ENCODE measurements at regions of chr10 and their contacts with region 1.

Region 1: GRCh38 chr10:97714048-97714371 is 480 bp downstream of the MARVELD1 start:
- DNase-seq: peak; percentile 71
- H3K4me3 Mint-ChIP-seq: peak overlapping the region; percentile 100
- H3K27ac Mint-ChIP-seq: peak overlapping the region; percentile 84
- H3K4me1 Mint-ChIP-seq: peaks cover 17% of the 10 kb centered on the region
- H3K27me3 Mint-ChIP-seq: peaks cover 90% of the 10 kb centered on the region

Region 2: GRCh38 chr10:97659589-97659988 is 54.4 kb before region 1 on chr10:
- CTCF ChIA-PET with region 1: no interaction called
- DNase-seq: no peak
- H3K4me3 Mint-ChIP-seq: no peak overlapping the region
- H3K27ac Mint-ChIP-seq: no peak overlapping the region
- H3K4me1 Mint-ChIP-seq: no peaks in the 10 kb centered on the region
- H3K27me3 Mint-ChIP-seq: no peaks in the 10 kb centered on the region

Region 3: GRCh38 chr10:97686962-97687784 is 26.8 kb before region 1 on chr10 and contains the start of gene AVPI1:
- CTCF ChIA-PET with region 1: interaction called, 27 read pairs
- DNase-seq: peak; percentile 97
- H3K4me3 Mint-ChIP-seq: peak within 1 kb of the TSS; percentile 80
- H3K27ac Mint-ChIP-seq: peak within 1 kb of the TSS; percentile 22
- H3K4me1 Mint-ChIP-seq: peaks cover 18% of the 10 kb centered on the region
- H3K27me3 Mint-ChIP-seq: peaks cover 16% of the 10 kb centered on the region

Region 4: GRCh38 chr10:97736902-97737769 is 23.1 kb after region 1 on chr10 and contains the start of gene ZFYVE27:
- CTCF ChIA-PET with region 1: interaction called, 402 read pairs
- DNase-seq: peak; percentile 97
- H3K4me3 Mint-ChIP-seq: peak within 1 kb of the TSS; percentile 95
- H3K27ac Mint-ChIP-seq: peak within 1 kb of the TSS; percentile 93
- H3K4me1 Mint-ChIP-seq: peaks cover 43% of the 10 kb centered on the region
- H3K27me3 Mint-ChIP-seq: peaks cover 9% of the 10 kb centered on the region

Region 5: DNA sequence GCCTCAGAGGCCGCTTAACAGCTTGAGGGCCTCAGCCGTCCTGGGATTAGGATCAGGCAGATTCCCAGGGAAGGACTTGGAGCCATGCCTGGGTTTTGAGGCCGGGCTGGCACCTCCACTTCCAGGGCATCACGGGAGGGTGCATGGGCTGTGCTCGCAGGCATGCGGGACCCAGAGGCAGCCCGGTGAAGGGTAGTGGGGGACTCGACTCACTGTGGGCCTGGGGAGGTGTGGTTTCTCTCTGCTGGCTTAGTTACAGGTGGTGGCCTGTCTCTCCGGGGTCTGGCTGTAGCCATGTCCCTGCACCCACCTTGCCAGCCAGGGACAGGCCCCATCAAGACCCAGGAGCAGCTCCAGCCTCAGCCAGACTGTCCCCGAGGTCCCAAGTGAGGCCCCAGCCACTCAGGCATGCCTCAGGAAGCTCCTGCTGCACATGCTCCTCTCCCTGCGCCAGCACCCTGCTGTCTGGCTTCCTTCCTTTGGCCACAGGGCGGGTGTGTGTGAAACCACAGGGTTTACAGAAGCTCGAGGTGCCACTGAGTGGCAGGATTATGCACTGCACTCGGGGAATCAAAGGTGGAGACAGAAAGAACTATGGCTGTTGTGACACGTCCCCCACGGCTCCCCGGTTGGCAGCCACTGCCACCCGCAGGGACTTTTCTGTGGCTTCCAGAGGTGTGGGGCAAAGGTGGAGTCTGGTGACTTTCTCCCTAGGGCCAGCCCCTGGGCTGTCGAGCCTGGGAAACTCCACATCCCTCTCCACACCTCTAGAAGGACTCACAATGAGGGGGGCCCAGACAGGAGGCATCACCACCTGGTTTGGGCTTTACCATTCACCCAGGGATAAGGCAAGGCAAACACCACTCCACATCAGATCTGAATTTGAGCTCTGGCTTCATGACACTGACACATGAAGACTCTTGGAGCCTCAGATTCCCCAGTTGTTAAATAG is 155.4 kb after region 1 on chr10:
- CTCF ChIA-PET with region 1: interaction called, 16 read pairs
- DNase-seq: peak; percentile 94
- H3K4me3 Mint-ChIP-seq: no peak overlapping the region
- H3K27ac Mint-ChIP-seq: peak overlapping the region; percentile 52
- H3K4me1 Mint-ChIP-seq: peaks cover 19% of the 10 kb centered on the region
- H3K27me3 Mint-ChIP-seq: peaks cover 44% of the 10 kb centered on the region

Measured in activated naive CD4-positive, alpha-beta T cell treated with anti-CD3 and anti-CD28 coated beads, Interleukin-2, amount 10 ng/mL, durations not matched to agents 7 days and 5 days (primary cell).